Heart right ventricle (tissue), 16 donors: ENCODE measurements at regions of chr17 and their contacts with region 1.

Region 1: DNA sequence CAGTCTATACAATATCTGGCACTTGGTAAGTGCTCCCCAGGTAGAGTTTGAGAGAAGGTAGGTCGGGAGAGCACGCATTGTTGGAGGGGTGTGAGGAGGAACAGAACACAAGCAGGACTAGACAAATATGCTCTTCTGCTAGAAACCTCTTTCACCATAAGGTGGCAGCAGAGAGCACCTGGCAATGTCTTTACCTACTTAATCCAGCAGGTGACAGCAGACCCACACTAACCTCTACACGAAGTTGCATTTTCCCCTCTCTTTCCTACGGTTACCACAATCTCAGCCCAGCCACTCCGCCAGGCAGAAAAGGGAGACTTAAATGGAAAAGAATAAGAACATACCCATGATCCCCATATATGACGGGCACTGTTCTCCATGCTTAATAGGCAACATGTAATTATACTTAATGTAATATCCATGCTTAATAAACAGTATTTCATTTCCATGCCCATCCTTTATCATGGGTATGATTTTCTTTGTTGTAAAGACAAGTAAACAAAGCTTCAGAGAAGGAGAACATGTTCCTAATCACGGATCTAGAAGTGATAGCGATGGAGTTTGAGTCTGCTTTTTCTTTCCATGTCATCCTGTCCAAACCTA is 55.1 kb upstream of the CCL2 start:
- DNase-seq: peak; percentile 38 to 81
- ATAC-seq: peak; percentile 88 to 97 (median 90)
- H3K4me3 ChIP-seq: no peak overlapping the region
- H3K27ac ChIP-seq: peak overlapping the region in 2 of 10 donors; percentile 30 to 72
- H3K4me1 ChIP-seq: peaks cover 0 to 28% (median 6%) of the 10 kb centered on the region in 9 donors
- H3K27me3 ChIP-seq: peaks cover 0 to 37% (median 3%) of the 10 kb centered on the region in 7 donors
- CTCF ChIP-seq: peak; percentile 100

Region 2: DNA sequence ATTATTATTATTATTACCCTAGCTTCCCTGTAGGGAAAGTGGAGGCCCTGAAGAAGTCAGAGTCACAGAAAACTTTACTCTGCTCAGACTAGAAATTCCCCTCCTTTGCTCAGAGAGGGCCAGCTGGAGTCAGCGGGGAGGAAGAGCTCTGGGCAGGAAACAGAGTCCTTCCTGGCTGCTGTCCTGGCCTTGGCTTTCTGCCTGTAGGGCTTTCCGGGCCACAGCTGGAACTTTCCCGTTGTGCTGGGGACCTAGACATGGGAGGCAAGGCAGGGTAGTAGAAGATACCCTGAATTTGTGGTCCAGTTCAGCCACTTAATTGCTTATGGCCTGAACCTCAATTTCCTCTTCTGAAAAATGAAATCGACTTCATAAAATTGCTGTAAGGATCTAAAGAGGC is 41.0 kb after region 1 on chr17:
- intact Hi-C with region 1: loop called in 1 of 10 experiments (anchors 5 kb)
- DNase-seq: peak; percentile 85 to 88
- ATAC-seq: peak; percentile 72 to 90 (median 88)
- H3K4me3 ChIP-seq: no peak overlapping the region
- H3K27ac ChIP-seq: peak overlapping the region in 9 of 10 donors; percentile 23 to 93 (median 68)
- H3K4me1 ChIP-seq: peaks cover 6 to 100% (median 75%) of the 10 kb centered on the region in 9 donors
- H3K27me3 ChIP-seq: no peaks in the 10 kb centered on the region
- CTCF ChIP-seq: no peak

Region 3: DNA sequence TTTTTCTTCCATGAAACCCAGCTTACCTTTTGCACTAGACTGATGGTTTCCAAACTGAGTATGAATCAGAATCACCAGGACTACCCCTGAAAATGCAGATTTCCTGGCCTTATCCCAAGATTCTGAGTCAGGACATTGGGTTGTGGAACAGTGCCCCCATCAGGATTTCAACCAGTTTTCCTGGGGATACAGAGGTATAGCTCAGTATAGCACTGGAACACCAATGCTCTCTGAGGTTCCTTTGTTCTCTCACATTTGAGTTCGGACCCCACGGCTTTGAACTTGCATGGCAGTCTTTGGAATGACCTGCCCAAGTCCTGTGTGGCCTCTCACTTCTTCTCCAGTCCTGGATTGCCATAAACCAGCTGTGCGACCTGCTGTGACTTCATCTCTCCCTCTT is 106.4 kb after region 1 on chr17:
- intact Hi-C with region 1: loop called (anchors 1 to 5 kb)
- DNase-seq: peak in 1 of 2 donors; percentile 48
- ATAC-seq: peak; percentile 68 to 86 (median 80)
- H3K4me3 ChIP-seq: no peak overlapping the region
- H3K27ac ChIP-seq: peak overlapping the region in 5 of 10 donors; percentile 2 to 69 (median 30)
- H3K4me1 ChIP-seq: peaks cover 0 to 64% (median 32%) of the 10 kb centered on the region in 9 donors
- H3K27me3 ChIP-seq: peaks cover 0 to 5% (median 0%) of the 10 kb centered on the region in 7 donors
- CTCF ChIP-seq: peak in 8 of 9 donors; percentile 45 to 69 (median 55)

Region 4: GRCh38 chr17:34892461-34893249 is 692.6 kb after region 1 on chr17:
- intact Hi-C with region 1: no loop called
- DNase-seq: no peak
- ATAC-seq: peak in 3 of 8 donors; percentile 44 to 64 (median 51)
- H3K4me3 ChIP-seq: no peak overlapping the region
- H3K27ac ChIP-seq: no peak overlapping the region
- H3K4me1 ChIP-seq: no peaks in the 10 kb centered on the region
- H3K27me3 ChIP-seq: peaks cover 7 to 84% (median 58%) of the 10 kb centered on the region in 7 donors
- CTCF ChIP-seq: peak in 7 of 9 donors; percentile 40 to 58 (median 49)